A673 (cell line): ENCODE measurements at regions of chr11 and their contacts with region 1.

Region 1: DNA sequence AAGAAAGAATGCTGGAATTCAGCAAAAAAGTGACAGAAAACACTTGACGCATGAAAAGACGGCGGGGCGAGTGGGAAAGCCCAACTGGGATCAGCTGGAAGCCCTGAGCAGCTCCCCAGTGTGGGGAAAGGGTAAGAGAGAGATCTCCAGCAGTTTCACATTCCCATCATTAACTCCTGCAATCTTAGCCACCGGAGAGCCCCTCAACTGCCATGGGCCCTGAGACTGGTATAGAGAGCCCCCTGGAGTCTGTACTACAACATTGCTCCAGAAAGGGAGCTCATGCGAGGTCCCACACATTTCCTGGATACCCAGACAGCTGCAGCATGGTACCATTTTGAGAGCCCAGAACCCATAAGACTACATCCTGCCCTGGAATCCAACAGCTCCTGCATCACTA is 31.1 kb downstream of the MRGPRX4 start:
- DNase-seq: peak; percentile 58
- H3K4me3 ChIP-seq: no peak overlapping the region
- H3K27ac ChIP-seq: no peak overlapping the region
- H3K4me1 ChIP-seq: no peaks in the 10 kb centered on the region
- H3K27me3 ChIP-seq: no peaks in the 10 kb centered on the region
- CTCF ChIP-seq: peak; percentile 64

Region 2: DNA sequence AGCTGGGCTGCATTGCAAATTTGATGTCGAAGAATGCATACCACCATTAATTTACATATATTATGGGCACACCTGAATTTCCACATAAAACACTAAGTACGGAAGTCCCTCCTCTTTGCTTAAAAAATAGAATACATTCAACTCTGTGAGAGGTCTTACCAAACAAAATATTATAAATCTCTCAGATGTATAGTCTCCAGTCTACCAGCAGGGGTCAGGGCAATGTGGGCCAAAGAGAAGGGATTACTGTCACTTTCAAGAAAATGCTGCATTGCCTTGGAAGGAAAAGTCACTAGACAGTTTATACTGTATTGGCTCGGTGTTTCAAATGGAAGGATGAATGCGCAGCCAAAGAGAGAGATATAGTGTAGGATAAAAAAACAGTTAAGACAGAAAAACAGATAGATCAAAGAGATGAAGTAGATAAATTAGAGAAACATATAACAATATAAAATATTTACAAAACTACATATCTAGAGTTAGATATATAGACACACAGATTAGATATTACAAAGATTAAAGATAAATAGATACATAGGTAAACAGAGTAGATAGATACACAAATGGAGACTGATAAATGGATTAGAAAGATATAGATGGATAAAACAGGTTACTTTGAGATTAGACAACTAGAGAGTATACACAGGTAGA is 211.8 kb before region 1 on chr11:
- CTCF ChIA-PET with region 1: no interaction called
- POLR2A ChIA-PET with region 1: no interaction called
- intact Hi-C with region 1: loop called (anchors 5 kb)
- DNase-seq: peak; percentile 68
- H3K4me3 ChIP-seq: no peak overlapping the region
- H3K27ac ChIP-seq: no peak overlapping the region
- H3K4me1 ChIP-seq: no peaks in the 10 kb centered on the region
- H3K27me3 ChIP-seq: no peaks in the 10 kb centered on the region
- CTCF ChIP-seq: peak; percentile 85

Region 3: GRCh38 chr11:18193010-18193409 is 10.7 kb before region 1 on chr11:
- CTCF ChIA-PET with region 1: no interaction called
- POLR2A ChIA-PET with region 1: no interaction called
- intact Hi-C with region 1: no loop called
- DNase-seq: peak; percentile 2
- H3K4me3 ChIP-seq: no peak overlapping the region
- H3K27ac ChIP-seq: no peak overlapping the region
- H3K4me1 ChIP-seq: no peaks in the 10 kb centered on the region
- H3K27me3 ChIP-seq: peaks cover 3% of the 10 kb centered on the region
- CTCF ChIP-seq: no peak

Region 4: GRCh38 chr11:18383388-18384156 is 179.8 kb after region 1 on chr11:
- CTCF ChIA-PET with region 1: no interaction called
- POLR2A ChIA-PET with region 1: no interaction called
- intact Hi-C with region 1: no loop called
- DNase-seq: peak; percentile 69
- H3K4me3 ChIP-seq: no peak overlapping the region
- H3K27ac ChIP-seq: peak overlapping the region; percentile 50
- H3K4me1 ChIP-seq: peaks cover 12% of the 10 kb centered on the region
- H3K27me3 ChIP-seq: no peaks in the 10 kb centered on the region
- CTCF ChIP-seq: no peak

Region 5: GRCh38 chr11:18408558-18409242 is 205.0 kb after region 1 on chr11:
- CTCF ChIA-PET with region 1: no interaction called
- POLR2A ChIA-PET with region 1: no interaction called
- intact Hi-C with region 1: no loop called
- DNase-seq: no peak
- H3K4me3 ChIP-seq: no peak overlapping the region
- H3K27ac ChIP-seq: no peak overlapping the region
- H3K4me1 ChIP-seq: no peaks in the 10 kb centered on the region
- H3K27me3 ChIP-seq: no peaks in the 10 kb centered on the region
- CTCF ChIP-seq: no peak

Region 6: DNA sequence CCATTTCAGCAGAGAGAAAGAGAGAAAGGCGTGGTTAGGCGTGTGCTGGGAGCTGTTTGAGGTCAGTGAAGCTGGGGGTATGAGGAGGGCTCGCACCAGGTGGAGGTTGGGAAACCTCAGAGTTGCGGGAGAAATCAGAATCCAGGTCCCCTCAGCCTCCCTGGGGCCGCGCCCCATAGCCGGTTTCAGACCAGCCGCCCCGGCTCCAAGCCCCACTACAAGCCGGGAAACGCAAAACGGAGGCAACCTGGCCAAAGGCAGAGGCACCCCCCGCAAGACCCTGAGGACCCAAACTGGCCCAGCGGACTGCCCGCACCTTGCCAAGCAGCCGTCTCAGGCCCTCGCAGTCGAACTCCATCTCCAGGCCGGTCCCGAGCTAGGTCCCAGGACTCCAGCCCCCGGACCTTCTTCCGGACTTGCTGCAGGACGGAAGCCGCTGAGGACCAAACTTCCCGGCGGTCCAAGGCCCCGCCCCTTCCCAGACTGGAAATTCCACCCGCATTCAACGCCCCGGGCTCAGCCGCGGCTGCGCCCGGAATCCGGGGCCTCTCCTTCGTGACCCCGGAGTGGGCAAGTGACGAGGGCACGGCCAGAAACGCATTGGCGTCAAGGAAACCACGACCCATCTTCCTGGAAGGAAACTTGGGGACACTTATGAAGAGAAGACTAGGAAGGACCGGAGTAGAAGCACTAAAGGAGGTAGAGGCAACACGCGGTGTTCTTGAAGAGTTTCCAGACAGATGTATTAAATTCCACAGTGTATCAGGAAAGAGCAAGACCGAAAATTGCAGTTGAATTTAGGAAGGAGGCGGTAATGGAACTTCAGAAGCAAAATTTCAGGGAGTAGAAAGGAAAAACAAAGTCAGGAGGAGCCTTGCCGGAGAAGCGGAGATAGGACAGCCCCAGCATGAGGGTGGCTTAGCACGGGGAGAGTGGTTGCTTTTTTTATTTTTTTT is 384.9 kb after region 1 on chr11 and contains the start of gene UEVLD:
- CTCF ChIA-PET with region 1: no interaction called
- POLR2A ChIA-PET with region 1: no interaction called
- intact Hi-C with region 1: no loop called
- DNase-seq: peak; percentile 85
- H3K4me3 ChIP-seq: peak within 1 kb of the TSS; percentile 76
- H3K27ac ChIP-seq: peak within 1 kb of the TSS; percentile 72
- H3K4me1 ChIP-seq: peaks cover 8% of the 10 kb centered on the region
- H3K27me3 ChIP-seq: no peaks in the 10 kb centered on the region
- CTCF ChIP-seq: no peak
- total RNA-seq, gene UEVLD: 17.5 and 17.8 TPM in 2 replicates